Right ventricle myocardium inferior (tissue), 1 donor: ENCODE measurements at regions of chr16 and their contacts with region 1.

Region 1: GRCh38 chr16:66872943-66873684 is 7.2 kb upstream of the PDP2 start:
- DNase-seq: peak; percentile 96
- ATAC-seq: peak; percentile 97

Region 2: GRCh38 chr16:66608241-66609138 is 264.6 kb before region 1 on chr16:
- intact Hi-C with region 1: loop called (anchors 5 kb)
- DNase-seq: peak; percentile 92
- ATAC-seq: peak; percentile 52

Region 3: GRCh38 chr16:66660422-66661209 is 212.5 kb before region 1 on chr16:
- intact Hi-C with region 1: loop called (anchors 5 kb)
- DNase-seq: peak; percentile 79
- ATAC-seq: peak; percentile 95

Region 4: GRCh38 chr16:66751303-66751991 is 121.7 kb before region 1 on chr16 and contains the start of gene DYNC1LI2:
- intact Hi-C with region 1: loop called (anchors 5 kb)
- DNase-seq: peak; percentile 95
- ATAC-seq: peak; percentile 95
- total RNA-seq, gene DYNC1LI2: 76.6 TPM

Region 5: DNA sequence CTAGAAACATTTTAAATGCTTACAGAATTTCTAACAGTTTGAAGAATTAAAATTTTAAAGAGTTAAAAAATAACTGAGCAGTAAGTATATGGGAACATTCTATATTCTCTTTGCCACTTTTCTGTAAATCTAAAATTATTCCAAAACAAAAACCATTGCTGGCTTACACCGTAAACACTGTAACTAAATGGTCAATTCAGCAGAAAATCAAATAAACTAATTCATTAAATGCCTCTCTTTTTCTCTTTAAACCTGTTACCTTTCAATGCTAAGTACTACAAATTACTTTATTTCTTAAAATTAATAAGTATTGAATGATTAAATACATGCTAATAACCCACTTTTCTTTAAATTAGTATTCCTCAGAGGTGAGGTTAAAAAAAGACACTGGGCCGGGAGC is 85.7 kb before region 1 on chr16:
- intact Hi-C with region 1: no loop called
- DNase-seq: no peak
- ATAC-seq: no peak